CD14-positive monocyte (primary cell): ENCODE measurements at regions of chr3 and their contacts with region 1.

Region 1: GRCh38 chr3:51682079-51682478 is 11.0 kb downstream of the TEX264 start:
- DNase-seq: peak; percentile 78 to 83 (median 81)
- H3K4me3 ChIP-seq: peak overlapping the region in 1 of 3 experiments; percentile 51
- H3K4me3 Mint-ChIP-seq: peak overlapping the region in 1 of 2 donors; percentile 72
- H3K27ac ChIP-seq: peak overlapping the region in 1 of 2 donors; percentile 55
- H3K27ac Mint-ChIP-seq: peak overlapping the region; percentile 58 to 90 (median 84)
- H3K4me1 ChIP-seq: peaks cover 42 to 56% of the 10 kb centered on the region in 2 donors
- H3K4me1 Mint-ChIP-seq: peaks cover 81% of the 10 kb centered on the region
- H3K27me3 ChIP-seq: no peaks in the 10 kb centered on the region
- H3K27me3 Mint-ChIP-seq: peaks cover 0 to 5% (median 3%) of the 10 kb centered on the region in 3 donors
- CTCF ChIP-seq: peak; percentile 91

Region 2: DNA sequence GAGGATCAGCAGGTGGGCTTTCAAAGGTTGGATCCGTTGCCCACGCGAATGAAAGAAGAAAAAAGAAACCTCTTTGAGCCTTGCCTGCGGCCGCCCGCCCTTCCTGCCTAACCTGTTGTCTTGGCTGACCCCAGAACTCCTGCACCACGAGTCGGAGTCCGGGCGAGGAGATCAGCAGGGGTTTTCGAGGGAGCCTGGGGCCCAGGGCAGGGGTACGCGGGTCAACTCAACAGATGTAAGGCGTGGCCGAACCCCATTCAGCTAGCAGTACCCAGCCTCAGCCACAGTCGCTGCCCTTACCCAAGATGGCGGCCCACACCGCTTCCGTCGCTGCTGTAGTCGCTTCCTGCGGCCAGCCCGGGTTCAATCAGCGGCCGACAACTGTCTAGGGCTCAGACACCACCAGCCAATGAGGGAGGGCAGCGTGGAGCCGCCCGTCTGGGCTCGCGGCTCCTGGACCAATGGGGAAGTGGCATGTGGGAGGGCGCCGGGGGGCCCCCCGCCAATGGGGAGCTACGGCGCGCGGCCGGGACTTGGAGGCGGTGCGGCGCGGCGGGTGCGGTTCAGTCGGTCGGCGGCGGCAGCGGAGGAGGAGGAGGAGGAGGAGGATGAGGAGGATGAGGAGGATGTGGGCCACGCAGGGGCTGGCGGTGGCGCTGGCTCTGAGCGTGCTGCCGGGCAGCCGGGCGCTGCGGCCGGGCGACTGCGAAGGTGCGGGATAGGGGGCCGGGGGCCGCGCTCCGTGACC is 297.2 kb before region 1 on chr3 and contains the start of gene MANF:
- intact Hi-C with region 1: loop called in 1 of 2 experiments (anchors 5 kb)
- DNase-seq: peak; percentile 98
- H3K4me3 ChIP-seq: peak within 1 kb of the TSS; percentile 78 to 99 (median 83)
- H3K4me3 Mint-ChIP-seq: peak within 1 kb of the TSS; percentile 96 to 98
- H3K27ac ChIP-seq: peak within 1 kb of the TSS; percentile 64 to 97
- H3K27ac Mint-ChIP-seq: peak within 1 kb of the TSS; percentile 96 to 99 (median 97)
- H3K4me1 ChIP-seq: peaks cover 34 to 44% of the 10 kb centered on the region in 2 donors
- H3K4me1 Mint-ChIP-seq: peaks cover 38% of the 10 kb centered on the region
- H3K27me3 ChIP-seq: no peaks in the 10 kb centered on the region
- H3K27me3 Mint-ChIP-seq: peaks cover 0 to 3% (median 1%) of the 10 kb centered on the region in 3 donors
- CTCF ChIP-seq: no peak
- polyA plus RNA-seq, gene MANF: 14.1 to 30.2 (median 23.6) TPM

Region 3: GRCh38 chr3:51622868-51623267 is 59.2 kb before region 1 on chr3:
- intact Hi-C with region 1: no loop called
- DNase-seq: no peak
- H3K4me3 ChIP-seq: no peak overlapping the region
- H3K4me3 Mint-ChIP-seq: no peak overlapping the region
- H3K27ac ChIP-seq: peak overlapping the region in 1 of 2 donors; percentile 56
- H3K27ac Mint-ChIP-seq: peak overlapping the region in 5 of 7 donors; percentile 4 to 89 (median 30)
- H3K4me1 ChIP-seq: peaks cover 21 to 22% of the 10 kb centered on the region in 2 donors
- H3K4me1 Mint-ChIP-seq: peaks cover 34% of the 10 kb centered on the region
- H3K27me3 ChIP-seq: no peaks in the 10 kb centered on the region
- H3K27me3 Mint-ChIP-seq: no peaks in the 10 kb centered on the region
- CTCF ChIP-seq: no peak

Region 4: GRCh38 chr3:51642462-51642861 is 39.6 kb before region 1 on chr3:
- intact Hi-C with region 1: loop called (anchors 2 to 5 kb)
- DNase-seq: peak in 2 of 3 donors; percentile 21 to 27
- H3K4me3 ChIP-seq: no peak overlapping the region
- H3K4me3 Mint-ChIP-seq: no peak overlapping the region
- H3K27ac ChIP-seq: no peak overlapping the region
- H3K27ac Mint-ChIP-seq: no peak overlapping the region
- H3K4me1 ChIP-seq: peaks cover 0 to 5% of the 10 kb centered on the region in 2 donors
- H3K4me1 Mint-ChIP-seq: peaks cover 4% of the 10 kb centered on the region
- H3K27me3 ChIP-seq: no peaks in the 10 kb centered on the region
- H3K27me3 Mint-ChIP-seq: no peaks in the 10 kb centered on the region
- CTCF ChIP-seq: peak; percentile 34